ENCODE measurements at regions of chrX and their contacts with region 1.

Region 1: DNA sequence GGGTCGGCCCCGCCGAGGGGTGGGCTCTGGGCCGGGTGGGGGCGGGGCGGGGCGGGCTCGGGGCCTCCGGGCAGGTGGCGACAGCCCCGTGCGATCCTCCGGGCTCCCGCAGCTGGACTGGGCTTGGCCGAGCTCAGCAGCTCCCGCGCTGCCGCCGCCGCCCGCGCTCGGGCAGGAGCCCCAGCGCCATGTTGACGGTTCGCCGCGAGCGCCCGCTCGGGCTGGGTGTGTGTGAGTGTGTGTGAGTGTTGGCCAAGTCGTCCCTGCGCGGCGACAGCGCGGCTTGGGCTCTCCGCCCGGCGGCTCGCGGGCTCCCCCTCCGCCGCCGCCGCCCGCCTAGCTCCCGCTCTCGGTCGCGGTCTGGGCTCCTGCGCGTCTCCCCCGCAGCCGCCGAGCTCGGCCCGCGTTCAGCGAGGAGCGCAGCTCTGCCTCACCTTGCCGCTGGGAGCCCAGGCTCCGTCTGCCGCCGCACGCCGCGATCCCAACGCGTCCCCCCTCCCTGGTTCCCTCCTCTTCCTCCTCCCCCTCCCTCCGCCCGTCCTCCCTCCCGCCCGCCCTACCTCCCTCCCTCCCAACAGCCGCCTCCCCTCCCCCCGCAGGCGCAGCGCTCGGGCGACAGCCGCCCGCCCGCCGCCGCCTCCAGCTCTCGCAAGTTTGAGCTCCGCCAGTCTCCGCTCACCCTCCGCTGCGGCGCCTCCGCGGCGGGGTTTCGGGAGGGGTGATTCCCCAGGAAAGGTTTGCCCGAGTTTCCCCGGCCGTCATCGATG is at the start of gene BCOR:
- DNase-seq: peak in 8 of 10 donors; percentile 38 to 75 (median 58)
- H3K4me3 ChIP-seq: peak within 1 kb of the TSS; percentile 49 to 87 (median 72)
- H3K27ac ChIP-seq: peak within 1 kb of the TSS; percentile 29 to 94 (median 87)
- H3K27me3 ChIP-seq: peaks cover 0 to 98% (median 69%) of the 10 kb centered on the region in 45 donors
- CTCF ChIP-seq: peak in 13 of 56 donors; percentile 7 to 35 (median 18)
- total RNA-seq, gene BCOR: 10.5 to 38.3 (median 19.7) TPM

Region 2: GRCh38 chrX:40108959-40109287 is 11.2 kb after region 1 on chrX:
- intact Hi-C with region 1: loop called in 1 of 2 experiments (anchors 1 kb)
- DNase-seq: peak in 7 of 10 donors; percentile 54 to 81 (median 59)
- H3K4me3 ChIP-seq: peak overlapping the region; percentile 12 to 75 (median 58)
- H3K27ac ChIP-seq: peak overlapping the region in 56 of 59 donors; percentile 38 to 92 (median 82)
- H3K27me3 ChIP-seq: peaks cover 0 to 94% (median 49%) of the 10 kb centered on the region in 45 donors
- CTCF ChIP-seq: peak in 1 of 56 donors; percentile 18

Region 3: DNA sequence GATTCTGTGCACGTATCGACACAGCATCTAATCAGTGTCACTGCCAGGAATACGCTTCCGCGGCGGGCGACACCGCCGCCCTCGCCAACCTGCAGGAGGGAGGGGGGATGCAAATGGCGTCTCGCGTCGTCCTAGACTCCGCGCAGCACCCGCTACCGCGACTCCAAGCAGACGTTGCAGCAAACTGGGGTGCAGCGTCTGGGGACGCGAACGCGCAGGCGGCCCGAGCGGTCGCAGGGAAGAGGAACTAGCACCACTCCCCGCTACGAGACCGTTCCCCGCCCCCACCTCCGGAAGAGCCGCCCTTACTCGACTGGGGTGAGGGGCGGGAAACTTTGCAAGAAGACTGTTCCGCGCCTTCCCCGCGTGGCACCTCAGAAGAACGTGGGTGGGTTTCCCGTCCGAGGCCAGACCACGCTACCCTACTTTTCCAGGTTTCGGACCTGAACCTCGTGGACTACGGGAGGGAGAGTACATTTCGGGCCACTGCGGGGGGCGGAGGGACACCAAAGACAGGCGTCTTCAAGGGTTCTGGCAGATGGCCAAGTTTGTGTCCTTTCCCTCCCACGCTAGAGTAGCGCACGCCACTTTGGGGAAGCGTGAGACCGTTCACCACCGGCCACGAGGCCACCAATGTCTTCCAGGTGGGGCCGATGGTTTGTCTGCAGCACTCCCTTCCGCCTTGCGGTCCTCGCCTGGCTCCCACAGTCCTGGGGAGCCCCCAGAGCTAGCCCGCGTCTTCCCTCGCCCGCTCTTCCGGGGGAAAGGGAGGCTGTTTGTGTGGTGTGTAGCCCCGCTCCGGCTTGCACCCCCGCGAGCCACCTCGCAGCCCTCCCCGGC is 78.1 kb after region 1 on chrX:
- intact Hi-C with region 1: loop called in 1 of 2 experiments (anchors 5 kb)
- DNase-seq: peak in 6 of 10 donors; percentile 25 to 69 (median 49)
- H3K4me3 ChIP-seq: peak overlapping the region; percentile 30 to 72 (median 61)
- H3K27ac ChIP-seq: peak overlapping the region; percentile 61 to 97 (median 90)
- H3K27me3 ChIP-seq: peaks cover 0 to 99% (median 55%) of the 10 kb centered on the region in 45 donors
- CTCF ChIP-seq: peak in 1 of 56 donors; percentile 3

Measured in dorsolateral prefrontal cortex (tissue), 120 donors.